B cell (primary cell): ENCODE measurements at regions of chr15 and their contacts with region 1.

Region 1: GRCh38 chr15:101121511-101122090 is 130.2 kb downstream of the CHSY1 start:
- DNase-seq: peak; percentile 66
- ATAC-seq: peak; percentile 78
- H3K4me3 ChIP-seq: peak overlapping the region in 4 of 5 experiments; percentile 47 to 58 (median 52)
- H3K4me3 Mint-ChIP-seq: peak overlapping the region; percentile 54
- H3K27ac ChIP-seq: no peak overlapping the region
- H3K27ac Mint-ChIP-seq: peak overlapping the region; percentile 46
- H3K4me1 ChIP-seq: peaks cover 36 to 39% of the 10 kb centered on the region in 2 donors
- H3K4me1 Mint-ChIP-seq: peaks cover 40% of the 10 kb centered on the region
- H3K27me3 ChIP-seq: no peaks in the 10 kb centered on the region
- H3K27me3 Mint-ChIP-seq: no peaks in the 10 kb centered on the region
- CTCF ChIP-seq: peak; percentile 24

Region 2: GRCh38 chr15:101105059-101105891 is 16.3 kb before region 1 on chr15:
- CTCF ChIA-PET with region 1: no interaction called
- POLR2A ChIA-PET with region 1: interaction called, 12 read pairs
- intact Hi-C with region 1: no loop called
- DNase-seq: no peak
- ATAC-seq: no peak
- H3K4me3 ChIP-seq: no peak overlapping the region
- H3K4me3 Mint-ChIP-seq: no peak overlapping the region
- H3K27ac ChIP-seq: no peak overlapping the region
- H3K27ac Mint-ChIP-seq: no peak overlapping the region
- H3K4me1 ChIP-seq: no peaks in the 10 kb centered on the region
- H3K4me1 Mint-ChIP-seq: no peaks in the 10 kb centered on the region
- H3K27me3 ChIP-seq: no peaks in the 10 kb centered on the region
- H3K27me3 Mint-ChIP-seq: no peaks in the 10 kb centered on the region
- CTCF ChIP-seq: no peak